Naive thymus-derived CD8-positive, alpha-beta T cell (primary cell): ENCODE measurements at regions of chr6 and their contacts with region 1.

Region 1: GRCh38 chr6:75601304-75602245 is at the start of gene SENP6:
- DNase-seq: peak; percentile 61 to 89 (median 73)
- ATAC-seq: peak; percentile 68 to 79
- H3K4me3 Mint-ChIP-seq: peak within 1 kb of the TSS; percentile 95 to 100 (median 98)
- H3K27ac Mint-ChIP-seq: peak within 1 kb of the TSS; percentile 92 to 100 (median 98)
- H3K4me1 Mint-ChIP-seq: peaks cover 31 to 73% (median 66%) of the 10 kb centered on the region in 4 donors
- H3K27me3 Mint-ChIP-seq: no peaks in the 10 kb centered on the region
- polyA plus RNA-seq, gene SENP6: 48.4 to 67.3 (median 57.7) TPM

Region 2: GRCh38 chr6:75243333-75244062 is 358.1 kb before region 1 on chr6 and contains the start of gene COX7A2:
- POLR2A ChIA-PET with region 1: interaction called, 17 read pairs
- DNase-seq: peak; percentile 64 to 92 (median 82)
- ATAC-seq: peak; percentile 96 to 97
- H3K4me3 Mint-ChIP-seq: peak within 1 kb of the TSS; percentile 96 to 100 (median 98)
- H3K27ac Mint-ChIP-seq: peak within 1 kb of the TSS; percentile 96 to 99 (median 99)
- H3K4me1 Mint-ChIP-seq: peaks cover 6 to 39% (median 31%) of the 10 kb centered on the region in 4 donors
- H3K27me3 Mint-ChIP-seq: peaks cover 0 to 18% (median 0%) of the 10 kb centered on the region in 5 donors
- polyA plus RNA-seq, gene COX7A2: 788 to 1,025 (median 870) TPM

Region 3: GRCh38 chr6:75284632-75285286 is 316.8 kb before region 1 on chr6 and contains the start of gene TMEM30A:
- POLR2A ChIA-PET with region 1: interaction called, 27 read pairs
- DNase-seq: peak; percentile 89 to 97 (median 94)
- ATAC-seq: peak; percentile 89 to 90
- H3K4me3 Mint-ChIP-seq: no peak within 1 kb of the TSS
- H3K27ac Mint-ChIP-seq: no peak within 1 kb of the TSS
- H3K4me1 Mint-ChIP-seq: peaks cover 14 to 47% (median 26%) of the 10 kb centered on the region in 4 donors
- H3K27me3 Mint-ChIP-seq: no peaks in the 10 kb centered on the region
- polyA plus RNA-seq, gene TMEM30A: 36.8 to 50.9 (median 37.8) TPM

Region 4: GRCh38 chr6:75611702-75612375 is 10.3 kb after region 1 on chr6:
- POLR2A ChIA-PET with region 1: interaction called, 10 read pairs
- DNase-seq: no peak
- ATAC-seq: peak; percentile 50 to 68
- H3K4me3 Mint-ChIP-seq: peak overlapping the region in 9 of 10 donors; percentile 30 to 73 (median 63)
- H3K27ac Mint-ChIP-seq: peak overlapping the region; percentile 25 to 88 (median 65)
- H3K4me1 Mint-ChIP-seq: peaks cover 30 to 97% (median 90%) of the 10 kb centered on the region in 4 donors
- H3K27me3 Mint-ChIP-seq: no peaks in the 10 kb centered on the region